ENCODE measurements at regions of chr4 and their contacts with region 1.

Region 1: DNA sequence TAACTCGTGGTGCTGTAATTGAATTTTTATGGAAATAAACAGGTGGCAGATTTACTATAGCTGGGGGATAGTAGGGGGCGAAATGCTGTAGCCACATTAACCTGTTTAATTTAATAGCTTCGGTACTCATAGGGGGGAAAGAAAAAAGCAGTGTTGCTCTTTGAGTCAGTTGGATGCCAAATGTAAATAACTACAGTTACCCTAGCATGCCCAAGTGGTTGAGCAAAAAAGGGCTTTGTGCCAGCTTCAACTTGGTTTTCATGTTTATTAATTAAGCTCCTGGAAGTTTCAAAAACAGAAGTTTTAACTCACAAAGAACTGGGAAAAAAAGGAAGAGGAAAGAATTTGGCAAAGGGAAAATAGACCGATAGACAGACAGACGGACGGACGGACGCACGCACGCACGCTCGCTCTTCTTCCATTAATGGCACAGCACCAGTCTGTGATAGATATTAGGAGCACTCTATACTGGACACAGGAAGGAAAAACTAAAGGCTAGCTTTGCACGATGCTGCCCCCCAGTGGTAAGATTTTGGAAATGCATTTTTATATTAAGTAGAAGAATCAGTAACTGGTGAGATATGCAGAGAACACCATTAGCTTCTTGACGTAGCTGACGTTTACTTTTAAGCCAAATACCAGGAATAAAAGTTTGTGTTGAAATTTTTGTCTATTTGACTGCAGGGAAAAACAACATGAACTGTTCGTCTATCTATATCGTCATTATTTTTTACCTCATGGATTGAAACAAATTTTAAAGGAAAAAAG is 151.8 kb downstream of the SLC7A11 start:
- DNase-seq: peak; percentile 72
- H3K4me3 Mint-ChIP-seq: peak overlapping the region; percentile 61
- H3K27ac Mint-ChIP-seq: peak overlapping the region; percentile 22
- H3K4me1 Mint-ChIP-seq: peaks cover 33% of the 10 kb centered on the region
- H3K27me3 Mint-ChIP-seq: no peaks in the 10 kb centered on the region
- CTCF ChIP-seq: peak; percentile 30

Region 2: GRCh38 chr4:138138774-138139173 is 48.4 kb after region 1 on chr4:
- CTCF ChIA-PET with region 1: no interaction called
- intact Hi-C with region 1: no loop called
- DNase-seq: no peak
- H3K4me3 Mint-ChIP-seq: no peak overlapping the region
- H3K27ac Mint-ChIP-seq: no peak overlapping the region
- H3K4me1 Mint-ChIP-seq: peaks cover 19% of the 10 kb centered on the region
- H3K27me3 Mint-ChIP-seq: no peaks in the 10 kb centered on the region
- CTCF ChIP-seq: no peak

Region 3: DNA sequence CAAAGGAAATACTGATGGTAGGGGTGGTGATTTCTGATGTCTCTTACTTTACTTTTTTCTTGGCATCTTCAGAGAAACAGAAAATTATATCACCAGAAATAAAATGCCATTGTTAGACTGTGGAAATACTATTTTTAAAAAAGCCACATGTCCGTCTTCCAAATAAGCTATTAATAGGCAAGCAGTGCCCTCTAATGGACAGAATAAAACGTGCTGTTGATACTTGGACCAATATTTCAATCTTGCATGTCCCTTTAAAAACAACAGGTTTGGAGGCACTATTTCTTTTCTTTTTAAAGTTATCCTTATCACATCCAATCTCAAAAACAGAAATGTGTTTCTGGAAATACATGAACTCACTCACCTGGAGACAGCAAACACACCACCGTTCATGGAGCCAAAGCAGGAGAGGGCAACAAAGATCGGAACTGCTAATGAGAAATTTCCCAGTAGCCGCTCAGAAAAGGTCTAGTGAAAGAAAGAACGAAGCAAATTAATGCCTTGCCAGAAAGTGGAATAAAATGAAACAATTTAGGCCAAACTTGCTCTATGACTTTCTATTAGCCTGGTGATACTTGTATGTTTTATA is 92.6 kb after region 1 on chr4:
- CTCF ChIA-PET with region 1: interaction called, 4 read pairs
- intact Hi-C with region 1: loop called (anchors 1 kb)
- DNase-seq: peak; percentile 24
- H3K4me3 Mint-ChIP-seq: no peak overlapping the region
- H3K27ac Mint-ChIP-seq: peak overlapping the region; percentile 58
- H3K4me1 Mint-ChIP-seq: peaks cover 39% of the 10 kb centered on the region
- H3K27me3 Mint-ChIP-seq: no peaks in the 10 kb centered on the region
- CTCF ChIP-seq: peak; percentile 30

Measured in Calu3 (cell line).